ENCODE measurements at regions of chr1 and their contacts with region 1.

Region 1: GRCh38 chr1:204791453-204792353 is 79.0 kb upstream of the NFASC start:
- DNase-seq: peak; percentile 92
- H3K4me3 Mint-ChIP-seq: no peak overlapping the region
- H3K27ac Mint-ChIP-seq: no peak overlapping the region
- H3K4me1 Mint-ChIP-seq: peaks cover 4% of the 10 kb centered on the region
- H3K27me3 Mint-ChIP-seq: peaks cover 20% of the 10 kb centered on the region

Region 2: GRCh38 chr1:204607910-204608309 is 183.8 kb before region 1 on chr1:
- CTCF ChIA-PET with region 1: interaction called, 15 read pairs
- intact Hi-C with region 1: no loop called
- DNase-seq: no peak
- H3K4me3 Mint-ChIP-seq: no peak overlapping the region
- H3K27ac Mint-ChIP-seq: no peak overlapping the region
- H3K4me1 Mint-ChIP-seq: no peaks in the 10 kb centered on the region
- H3K27me3 Mint-ChIP-seq: no peaks in the 10 kb centered on the region

Region 3: GRCh38 chr1:204868340-204868700 is 76.6 kb after region 1 on chr1:
- CTCF ChIA-PET with region 1: no interaction called
- intact Hi-C with region 1: no loop called
- DNase-seq: no peak
- H3K4me3 Mint-ChIP-seq: no peak overlapping the region
- H3K27ac Mint-ChIP-seq: no peak overlapping the region
- H3K4me1 Mint-ChIP-seq: no peaks in the 10 kb centered on the region
- H3K27me3 Mint-ChIP-seq: peaks cover 2% of the 10 kb centered on the region